ENCODE measurements at regions of chr11 and their contacts with region 1.

Region 1: DNA sequence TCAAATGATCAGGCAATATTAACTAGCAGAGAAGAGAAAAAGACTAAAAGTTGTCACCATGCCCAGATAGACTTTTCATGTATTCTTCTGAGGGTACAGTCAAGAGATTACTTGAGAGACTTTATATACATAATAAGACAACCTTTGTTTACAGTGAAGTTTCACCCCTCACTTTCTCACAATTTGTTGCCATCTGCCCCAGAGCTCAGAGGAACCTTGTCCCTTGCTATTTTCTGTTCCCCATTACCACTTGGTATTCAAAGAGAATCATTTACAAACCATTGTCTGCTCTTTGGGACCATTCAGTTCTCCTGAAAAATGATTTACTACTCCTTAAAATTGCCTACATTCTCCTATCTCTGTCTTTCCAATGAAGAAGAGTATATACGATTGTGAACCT is 544.6 kb downstream of the CNTN5 start:
- DNase-seq: no peak
- H3K4me3 ChIP-seq: no peak overlapping the region
- H3K27ac ChIP-seq: no peak overlapping the region
- H3K4me1 ChIP-seq: no peaks in the 10 kb centered on the region
- CTCF ChIP-seq: no peak

Region 2: GRCh38 chr11:99601179-99601578 is 35.8 kb after region 1 on chr11:
- CTCF ChIA-PET with region 1: no interaction called
- POLR2A ChIA-PET with region 1: no interaction called
- intact Hi-C with region 1: no loop called
- DNase-seq: no peak
- H3K4me3 ChIP-seq: no peak overlapping the region
- H3K27ac ChIP-seq: no peak overlapping the region
- H3K4me1 ChIP-seq: no peaks in the 10 kb centered on the region
- CTCF ChIP-seq: no peak

Region 3: DNA sequence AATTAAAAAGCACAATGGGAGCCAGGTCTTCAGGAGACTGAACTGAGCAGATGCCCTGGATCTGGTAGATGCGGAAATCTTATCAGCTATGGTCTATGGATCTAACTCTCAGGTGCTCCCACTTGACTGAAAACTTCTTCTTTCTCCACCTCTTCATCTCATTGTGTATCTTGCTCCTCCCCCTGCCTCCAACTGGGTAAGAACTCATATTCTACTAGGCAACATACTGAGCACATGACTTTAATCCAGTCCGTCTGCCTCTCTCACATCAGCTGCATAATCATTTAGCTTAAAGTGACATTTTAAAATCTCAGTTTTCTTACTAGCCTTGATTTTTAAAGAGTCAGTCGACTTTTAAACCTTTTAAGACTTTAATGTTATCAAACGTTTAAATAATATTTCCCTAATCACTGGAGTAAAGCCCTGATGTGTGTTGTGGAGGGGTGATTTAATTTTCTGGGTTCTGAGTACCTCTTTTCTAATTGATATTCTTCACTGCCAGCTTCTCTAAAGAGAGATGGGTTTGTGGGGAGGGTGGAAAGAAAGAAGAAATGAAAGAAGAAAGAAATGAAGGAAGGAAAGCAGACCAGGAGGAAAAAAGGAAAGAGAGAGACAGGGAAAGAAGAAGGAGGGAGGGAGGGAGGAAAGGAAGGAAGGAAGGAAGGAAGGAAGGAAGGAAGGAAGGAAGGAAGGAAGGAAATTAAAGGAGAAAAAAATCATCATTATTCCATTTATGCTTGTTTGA is 529.0 kb after region 1 on chr11:
- CTCF ChIA-PET with region 1: no interaction called
- POLR2A ChIA-PET with region 1: interaction called, 16 read pairs
- intact Hi-C with region 1: no loop called
- DNase-seq: no peak
- H3K4me3 ChIP-seq: no peak overlapping the region
- H3K27ac ChIP-seq: no peak overlapping the region
- H3K4me1 ChIP-seq: no peaks in the 10 kb centered on the region
- CTCF ChIP-seq: no peak